PC-9 (cell line): ENCODE measurements at regions of chr5 and their contacts with region 1.

Region 1: DNA sequence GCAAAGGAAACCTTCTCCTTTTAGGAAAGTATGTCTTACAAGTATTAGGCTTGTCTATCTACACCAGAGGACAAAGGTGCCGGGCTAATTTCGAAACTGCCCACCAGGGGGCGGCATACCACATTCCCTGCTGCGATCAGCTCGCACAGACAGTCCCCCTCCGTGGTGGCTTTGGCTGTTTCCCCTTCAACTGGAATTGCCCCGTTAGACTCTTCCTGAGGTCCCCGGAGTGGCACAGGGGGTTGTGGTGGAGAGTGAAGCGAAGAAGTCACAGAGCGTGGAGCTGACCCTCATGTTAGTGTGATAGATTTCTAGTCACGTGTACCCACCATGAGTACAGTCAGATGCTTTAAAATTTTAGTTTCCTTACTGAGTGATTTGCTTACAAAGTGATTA is 17.5 kb downstream of the PTTG1 start:
- DNase-seq: peak; percentile 57 to 83
- H3K4me3 ChIP-seq: peak overlapping the region; percentile 61
- H3K27ac ChIP-seq: no peak overlapping the region
- H3K4me1 ChIP-seq: peaks cover 6% of the 10 kb centered on the region; the same call in 1 of the 2 replicates
- H3K27me3 ChIP-seq: no peaks in the 10 kb centered on the region
- CTCF ChIP-seq: peak; percentile 93

Region 2: DNA sequence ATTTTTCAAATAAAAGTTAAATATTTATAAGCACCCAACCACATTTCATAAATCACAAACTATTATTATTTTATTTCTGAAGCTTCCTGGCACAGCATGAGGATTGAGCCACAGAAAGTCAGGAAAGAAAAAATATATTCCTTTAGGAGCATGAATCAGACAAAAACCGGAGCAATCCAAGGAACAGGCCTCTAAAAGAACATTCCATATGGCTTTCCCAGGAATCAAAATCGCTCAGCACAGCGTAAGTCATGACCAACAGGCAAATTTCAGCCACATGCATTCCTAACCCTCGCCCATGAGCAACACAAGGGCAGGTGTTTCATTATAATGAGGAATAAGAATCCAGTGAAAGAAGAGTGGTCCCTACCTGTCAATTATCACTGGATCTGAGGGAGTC is 1366.2 kb before region 1 on chr5:
- CTCF ChIA-PET with region 1: interaction called, 23 read pairs
- POLR2A ChIA-PET with region 1: no interaction called
- intact Hi-C with region 1: no loop called
- DNase-seq: no peak
- H3K4me3 ChIP-seq: no peak overlapping the region
- H3K27ac ChIP-seq: no peak overlapping the region
- H3K4me1 ChIP-seq: no peaks in the 10 kb centered on the region
- H3K27me3 ChIP-seq: peaks cover 97% of the 10 kb centered on the region
- CTCF ChIP-seq: no peak

Region 3: DNA sequence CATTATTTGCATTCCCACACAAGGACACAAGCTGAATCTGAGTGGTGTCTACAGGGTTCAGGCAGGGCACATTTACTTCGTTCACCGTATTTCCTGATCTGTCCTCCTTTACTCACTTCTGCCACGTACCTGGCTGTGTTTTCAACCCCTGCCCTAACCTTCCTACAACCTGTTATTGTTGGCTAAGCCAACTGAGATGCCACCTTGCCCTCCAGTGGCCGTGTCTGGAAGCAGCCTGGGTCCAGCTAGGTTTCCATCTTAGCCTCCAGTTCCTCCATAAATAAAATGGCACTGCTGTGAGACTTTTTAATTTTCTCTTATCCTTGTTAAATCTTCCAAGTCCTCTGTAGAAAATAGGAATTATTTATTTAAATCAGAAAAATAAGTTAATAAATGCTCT is 348.0 kb after region 1 on chr5:
- CTCF ChIA-PET with region 1: no interaction called
- POLR2A ChIA-PET with region 1: no interaction called
- intact Hi-C with region 1: loop called (anchors 5 kb)
- DNase-seq: peak in 1 of 2 experiments; percentile 11
- H3K4me3 ChIP-seq: no peak overlapping the region
- H3K27ac ChIP-seq: no peak overlapping the region
- H3K4me1 ChIP-seq: no peaks in the 10 kb centered on the region
- H3K27me3 ChIP-seq: no peaks in the 10 kb centered on the region
- CTCF ChIP-seq: peak; percentile 51; the same call in 1 of the 2 replicates